Astrocyte of the cerebellum (primary cell): ENCODE measurements at regions of chr5 and their contacts with region 1.

Region 1: DNA sequence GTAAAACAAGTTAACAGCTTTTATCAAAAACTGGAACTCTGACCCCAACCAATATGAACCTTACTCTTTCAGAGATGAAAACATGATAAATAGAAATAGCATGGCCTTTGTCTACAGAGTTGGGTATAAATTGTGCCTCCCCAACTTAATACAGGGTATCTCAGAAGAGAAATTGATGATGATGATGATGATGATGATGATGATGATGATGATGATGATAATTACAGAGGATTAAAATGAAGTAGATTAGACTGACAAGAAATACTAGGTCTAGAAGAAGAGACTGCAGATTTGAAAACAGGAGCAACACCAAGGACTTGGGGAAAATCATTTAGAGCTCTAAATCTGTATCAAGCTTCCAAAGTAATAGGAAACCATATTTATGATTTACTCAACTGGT is 27.1 kb downstream of the PFDN1 start:
- DNase-seq: no peak
- H3K4me3 ChIP-seq: no peak overlapping the region
- CTCF ChIP-seq: no peak

Region 2: GRCh38 chr5:139368613-139369012 is 907.2 kb before region 1 on chr5:
- in situ Hi-C with region 1: no loop called
- DNase-seq: no peak
- H3K4me3 ChIP-seq: no peak overlapping the region
- CTCF ChIP-seq: no peak

Region 3: DNA sequence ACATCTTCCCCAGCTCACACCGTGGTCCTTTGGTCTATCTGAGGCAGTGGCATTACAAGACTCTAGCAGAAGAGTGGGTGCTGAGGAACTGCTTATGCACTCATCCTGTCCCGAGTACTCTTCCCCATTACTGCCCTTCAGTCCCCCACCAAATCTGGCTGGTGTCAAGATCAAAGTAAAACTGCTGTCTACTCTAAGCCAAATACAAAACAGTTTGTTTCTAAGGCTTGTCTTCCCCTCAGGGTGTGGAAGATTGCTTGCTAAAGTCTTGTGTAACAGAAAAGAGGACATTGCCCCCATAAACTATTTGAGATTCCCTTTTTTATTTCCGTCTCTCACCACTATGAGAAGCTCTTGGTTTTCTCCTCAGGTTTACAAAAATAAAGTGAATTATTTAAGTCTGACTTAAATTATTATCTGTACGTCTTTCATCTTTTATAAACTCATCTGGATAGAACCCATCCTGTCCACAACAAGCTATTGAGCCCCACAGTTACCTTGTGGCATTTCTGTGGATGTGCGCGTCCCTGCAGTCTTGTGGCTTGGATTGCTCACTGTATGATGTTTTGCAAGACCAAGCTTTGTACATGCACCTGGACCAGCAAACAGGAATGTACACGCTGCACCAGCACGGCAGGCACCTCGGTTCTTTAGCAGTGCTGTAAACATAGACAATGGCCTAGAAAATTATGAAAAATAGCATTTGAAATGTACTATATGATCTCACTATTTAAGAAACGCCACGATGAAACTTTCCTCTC is 39.9 kb before region 1 on chr5:
- in situ Hi-C with region 1: no loop called
- DNase-seq: no peak
- H3K4me3 ChIP-seq: no peak overlapping the region
- CTCF ChIP-seq: no peak

Region 4: GRCh38 chr5:140312067-140312790 is 36.4 kb after region 1 on chr5:
- in situ Hi-C with region 1: loop called (anchors 5 kb)
- DNase-seq: peak; percentile 94
- H3K4me3 ChIP-seq: no peak overlapping the region
- CTCF ChIP-seq: no peak

Region 5: DNA sequence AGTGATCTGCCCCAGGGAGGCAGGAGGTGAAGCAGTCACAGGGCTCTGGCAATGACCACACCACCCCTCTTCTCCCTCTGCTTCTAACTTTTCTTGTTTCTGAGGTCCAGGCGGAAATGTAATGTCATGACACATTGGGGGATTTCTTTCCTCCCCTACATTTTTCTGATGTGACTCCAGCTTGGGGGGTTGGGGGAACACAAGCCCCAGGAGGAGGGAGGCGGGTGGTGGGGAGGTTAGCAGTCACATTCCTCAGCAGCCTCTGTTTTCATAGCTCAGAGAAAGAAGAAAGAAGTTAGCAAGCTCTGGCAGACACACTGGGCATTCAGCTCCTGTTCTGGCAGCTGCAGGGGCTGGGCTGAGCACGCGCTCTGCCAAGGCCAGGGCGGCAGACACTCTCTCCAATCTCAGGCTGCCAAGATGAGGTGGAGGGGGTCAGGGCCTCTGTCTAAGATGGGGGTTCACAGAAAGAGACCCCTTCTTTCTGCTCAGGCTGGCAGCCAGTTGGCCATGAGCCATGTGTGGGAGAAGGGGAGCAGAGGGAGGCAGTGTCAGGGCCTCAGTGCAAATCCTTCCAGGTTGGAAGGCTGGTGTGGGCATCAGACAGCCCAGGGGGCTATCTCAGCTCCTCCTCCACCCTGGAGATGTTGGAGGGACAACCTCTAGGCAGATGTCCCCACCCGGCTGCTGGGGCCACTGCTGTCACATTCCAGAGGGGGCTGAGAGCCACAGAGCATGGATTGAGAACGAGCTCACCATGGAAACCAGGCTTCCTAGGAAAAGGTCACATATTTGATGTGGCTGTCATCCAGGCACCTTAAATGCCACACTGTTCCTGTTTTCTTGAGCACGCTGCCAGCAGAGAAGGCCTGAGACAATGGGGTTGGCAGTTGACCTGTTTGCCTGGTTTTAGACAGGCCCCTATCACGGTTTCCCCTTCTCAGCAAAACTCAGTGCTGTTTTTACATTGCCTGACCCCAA is 47.2 kb after region 1 on chr5:
- in situ Hi-C with region 1: no loop called
- DNase-seq: peak; percentile 85
- H3K4me3 ChIP-seq: no peak overlapping the region
- CTCF ChIP-seq: no peak